Gastrocnemius medialis (tissue), 4 donors: ENCODE measurements at regions of chr16 and their contacts with region 1.

Region 1: GRCh38 chr16:3400779-3401688 is at the starts of genes ZNF174 and ZSCAN32:
- DNase-seq: peak; percentile 99
- ATAC-seq: peak; percentile 99
- H3K4me3 ChIP-seq: peak within 1 kb of the TSS; percentile 83 to 92 (median 90)
- H3K27ac ChIP-seq: peak within 1 kb of the TSS; percentile 81 to 92 (median 90)
- H3K4me1 ChIP-seq: peaks cover 16 to 21% of the 10 kb centered on the region in 2 donors
- H3K27me3 ChIP-seq: no peaks in the 10 kb centered on the region
- CTCF ChIP-seq: peak in 1 of 5 experiments; percentile 23
- POLR2A ChIP-seq: peak; percentile 64 to 70
- total RNA-seq, gene ZNF174: 6.7 to 15.6 (median 9.6) TPM
- total RNA-seq, gene ZSCAN32: 4.0 to 6.5 (median 4.7) TPM

Region 2: DNA sequence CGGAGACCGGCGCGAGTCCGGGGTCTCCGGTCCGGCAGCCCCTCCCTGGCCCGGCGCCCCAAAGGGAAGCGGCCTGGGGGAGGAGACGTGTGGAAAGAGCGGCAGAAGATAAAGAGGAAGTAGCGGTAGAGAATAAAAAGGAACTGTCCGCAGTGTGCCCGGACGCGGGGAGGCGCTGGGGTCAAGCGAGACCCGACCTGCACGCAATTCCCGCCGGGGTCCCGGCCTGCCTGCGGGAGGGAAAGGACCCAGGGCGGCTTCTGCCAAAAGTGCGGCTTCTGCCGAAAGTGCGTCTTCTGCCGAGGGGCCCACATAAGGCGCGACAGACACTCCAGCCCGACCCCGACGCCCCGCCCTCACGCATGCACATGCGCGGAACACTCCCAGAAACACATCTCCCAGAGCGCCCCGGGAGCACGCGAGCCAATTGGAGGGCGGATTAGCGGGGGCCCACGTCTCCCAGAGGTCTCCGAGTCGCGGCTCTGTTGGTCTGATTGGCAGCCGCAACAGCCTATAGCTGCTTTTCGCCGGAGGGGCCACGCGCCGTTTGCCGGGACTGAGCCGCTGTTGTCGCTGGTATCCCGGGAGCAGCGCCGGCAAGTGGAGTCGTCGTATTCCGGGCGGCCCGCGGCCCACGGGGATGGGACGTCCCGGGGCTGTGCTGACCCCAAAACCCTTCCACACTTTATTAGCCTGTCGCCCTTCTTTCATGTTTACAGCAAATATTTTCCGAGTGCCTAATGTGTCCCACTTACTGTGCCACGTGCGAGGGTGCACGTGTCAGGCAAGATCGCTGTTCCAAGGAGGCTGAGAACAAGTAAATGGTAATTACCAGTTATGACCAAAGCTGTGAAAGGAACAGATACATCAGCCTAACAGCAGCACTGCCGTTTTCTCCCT is 136.6 kb before region 1 on chr16:
- in situ Hi-C with region 1: no loop called
- intact Hi-C with region 1: loop called (anchors 1 kb)
- DNase-seq: peak; percentile 93 to 95
- ATAC-seq: peak; percentile 91 to 93
- H3K4me3 ChIP-seq: peak overlapping the region; percentile 65 to 94 (median 78)
- H3K27ac ChIP-seq: peak overlapping the region; percentile 92 to 99 (median 94)
- H3K4me1 ChIP-seq: peaks cover 0 to 5% of the 10 kb centered on the region in 2 donors
- H3K27me3 ChIP-seq: no peaks in the 10 kb centered on the region
- CTCF ChIP-seq: peak in 4 of 5 experiments; percentile 23 to 42 (median 34)
- POLR2A ChIP-seq: peak; percentile 86 to 90

Region 3: GRCh38 chr16:3305109-3306068 is 95.6 kb before region 1 on chr16 and contains the starts of genes TIGD7 and ZNF75A:
- in situ Hi-C with region 1: no loop called
- intact Hi-C with region 1: loop called (anchors 1 kb)
- DNase-seq: peak; percentile 78
- ATAC-seq: peak; percentile 97 to 98
- H3K4me3 ChIP-seq: peak within 1 kb of the TSS; percentile 75 to 83 (median 76)
- H3K27ac ChIP-seq: peak within 1 kb of the TSS; percentile 89 to 94 (median 92)
- H3K4me1 ChIP-seq: peaks cover 13 to 16% of the 10 kb centered on the region in 2 donors
- H3K27me3 ChIP-seq: no peaks in the 10 kb centered on the region
- CTCF ChIP-seq: peak in 4 of 5 experiments; percentile 20 to 35 (median 27)
- POLR2A ChIP-seq: peak; percentile 88 to 93
- total RNA-seq, gene TIGD7: 2.5 to 8.1 (median 4.4) TPM
- total RNA-seq, gene ZNF75A: 5.5 to 13.2 (median 12.5) TPM

Region 4: DNA sequence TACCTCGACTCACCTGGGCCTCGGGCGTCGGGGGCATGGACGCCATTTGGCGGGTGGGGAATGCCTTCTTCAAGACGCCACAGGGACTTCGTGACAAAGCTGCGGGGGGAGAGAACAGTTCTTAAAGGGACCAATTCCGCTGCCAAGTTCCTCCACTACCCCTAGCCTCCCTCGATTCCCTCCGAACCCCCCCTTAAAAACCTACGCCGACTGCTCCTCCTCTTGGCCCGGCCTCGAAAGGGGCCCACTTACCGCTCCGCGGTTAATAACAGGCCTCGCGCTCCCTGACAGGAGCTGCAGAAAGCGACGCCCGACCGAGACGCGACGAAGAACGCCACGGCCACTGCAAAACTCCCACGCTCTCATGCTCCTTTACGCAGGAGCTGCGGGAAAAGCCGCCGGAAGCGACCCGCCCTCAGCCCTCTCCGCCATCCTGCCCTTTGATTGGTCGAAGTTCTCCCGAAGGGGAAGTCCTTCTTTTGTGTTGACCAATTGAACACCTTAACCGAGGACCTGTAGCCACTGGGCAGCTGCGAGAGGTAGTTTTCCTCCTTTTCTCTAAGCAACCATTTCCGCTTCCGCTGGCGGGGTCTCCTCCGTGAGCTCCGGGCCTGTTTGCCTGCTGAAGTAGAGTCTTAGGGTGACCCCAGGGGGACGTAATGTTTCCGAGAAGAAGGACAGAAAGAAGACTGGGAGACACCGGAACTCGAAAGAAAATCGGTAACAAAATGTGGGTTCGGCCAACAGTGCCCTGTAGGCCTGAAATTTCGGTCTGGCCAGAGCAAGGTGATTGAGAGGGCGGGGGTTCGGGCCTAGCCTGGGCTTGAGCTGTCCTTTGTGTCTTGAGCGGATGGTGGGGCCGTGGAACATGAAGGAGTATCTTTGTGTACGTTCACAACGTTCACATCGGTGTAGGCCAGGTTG is 42.3 kb after region 1 on chr16 and contains the starts of genes NAA60 and ZNF597:
- in situ Hi-C with region 1: no loop called
- intact Hi-C with region 1: loop called (anchors 1 kb)
- DNase-seq: peak; percentile 81 to 83
- ATAC-seq: peak; percentile 100
- H3K4me3 ChIP-seq: peak within 1 kb of the TSS; percentile 64 to 80 (median 68)
- H3K27ac ChIP-seq: peak within 1 kb of the TSS; percentile 73 to 85 (median 84)
- H3K4me1 ChIP-seq: peaks cover 4 to 8% of the 10 kb centered on the region in 2 donors
- H3K27me3 ChIP-seq: no peaks in the 10 kb centered on the region
- CTCF ChIP-seq: no peak
- POLR2A ChIP-seq: peak; percentile 36 to 47
- total RNA-seq, gene NAA60: 14.2 to 16.7 (median 15.4) TPM
- total RNA-seq, gene ZNF597: 0.81 to 1.3 (median 0.96) TPM

Region 5: DNA sequence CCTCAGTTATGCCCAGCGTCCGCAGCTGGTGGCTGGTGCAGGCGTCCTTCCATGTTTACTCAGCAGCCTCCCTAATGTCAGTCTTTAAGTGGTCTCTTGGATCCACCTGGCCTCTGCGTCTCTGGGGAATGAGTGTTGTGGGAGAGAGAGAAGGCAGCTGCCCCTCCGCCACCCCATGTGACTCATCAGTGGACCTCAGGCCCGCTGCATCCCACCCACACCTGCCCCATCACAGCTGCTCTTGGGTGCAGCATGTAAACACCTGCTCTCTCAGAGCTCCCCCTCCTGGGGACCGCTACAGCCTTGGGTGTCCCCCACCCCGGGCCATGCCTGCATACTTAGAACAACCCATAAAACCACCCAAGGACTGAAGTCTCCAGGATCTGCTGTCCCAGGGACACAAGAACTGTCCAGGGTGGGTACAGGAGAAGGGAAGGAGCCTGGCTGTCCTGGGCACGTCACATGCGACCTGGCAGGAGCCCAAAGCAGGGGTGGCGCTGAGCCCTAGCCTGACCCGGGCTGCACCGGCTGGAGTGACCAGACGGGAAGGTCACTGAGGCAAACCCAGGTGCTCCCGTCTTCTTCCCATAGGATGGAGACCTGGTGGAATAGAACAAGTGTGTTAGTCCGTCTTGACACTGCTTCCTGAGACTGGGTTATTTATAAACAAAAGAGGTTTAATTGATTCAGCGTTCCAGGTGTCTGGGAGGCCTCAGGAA is 90.0 kb after region 1 on chr16:
- in situ Hi-C with region 1: loop called in 1 of 4 experiments (anchors 10 kb)
- intact Hi-C with region 1: no loop called
- DNase-seq: no peak
- ATAC-seq: no peak
- H3K4me3 ChIP-seq: no peak overlapping the region
- H3K27ac ChIP-seq: no peak overlapping the region
- H3K4me1 ChIP-seq: no peaks in the 10 kb centered on the region
- H3K27me3 ChIP-seq: no peaks in the 10 kb centered on the region
- CTCF ChIP-seq: no peak
- POLR2A ChIP-seq: no peak

Region 6: DNA sequence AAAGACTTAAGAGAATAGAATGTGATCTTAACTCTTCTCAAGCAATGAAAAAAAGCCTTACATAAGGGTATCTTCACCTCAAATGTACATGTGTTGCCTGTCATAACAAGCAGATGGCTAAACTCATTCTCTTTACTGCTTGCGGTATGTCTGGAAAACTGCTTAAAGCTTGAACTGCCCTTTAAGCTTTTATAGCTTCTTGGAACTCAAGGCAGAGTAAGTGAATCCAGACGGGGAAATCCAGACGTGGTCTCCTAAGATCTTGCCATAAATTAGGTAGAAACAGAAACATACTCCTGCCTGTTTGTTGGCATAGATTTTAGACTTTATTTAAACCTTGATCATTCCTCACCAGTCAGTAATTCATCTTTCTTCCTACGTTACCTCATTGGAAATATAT is 119.4 kb after region 1 on chr16:
- in situ Hi-C with region 1: no loop called
- intact Hi-C with region 1: no loop called
- DNase-seq: no peak
- ATAC-seq: no peak
- H3K4me3 ChIP-seq: no peak overlapping the region
- H3K27ac ChIP-seq: no peak overlapping the region
- H3K4me1 ChIP-seq: no peaks in the 10 kb centered on the region
- H3K27me3 ChIP-seq: no peaks in the 10 kb centered on the region
- CTCF ChIP-seq: no peak
- POLR2A ChIP-seq: no peak